AG04450 (cell line): ENCODE measurements at regions of chr4 and their contacts with region 1.

Region 1: GRCh38 chr4:72302981-72303704 is 265.9 kb downstream of the ADAMTS3 start:
- DNase-seq: peak; percentile 16
- H3K4me3 ChIP-seq: no peak overlapping the region
- H3K27ac ChIP-seq: no peak overlapping the region
- H3K27me3 ChIP-seq: no peaks in the 10 kb centered on the region
- CTCF ChIP-seq: peak; percentile 75

Region 2: DNA sequence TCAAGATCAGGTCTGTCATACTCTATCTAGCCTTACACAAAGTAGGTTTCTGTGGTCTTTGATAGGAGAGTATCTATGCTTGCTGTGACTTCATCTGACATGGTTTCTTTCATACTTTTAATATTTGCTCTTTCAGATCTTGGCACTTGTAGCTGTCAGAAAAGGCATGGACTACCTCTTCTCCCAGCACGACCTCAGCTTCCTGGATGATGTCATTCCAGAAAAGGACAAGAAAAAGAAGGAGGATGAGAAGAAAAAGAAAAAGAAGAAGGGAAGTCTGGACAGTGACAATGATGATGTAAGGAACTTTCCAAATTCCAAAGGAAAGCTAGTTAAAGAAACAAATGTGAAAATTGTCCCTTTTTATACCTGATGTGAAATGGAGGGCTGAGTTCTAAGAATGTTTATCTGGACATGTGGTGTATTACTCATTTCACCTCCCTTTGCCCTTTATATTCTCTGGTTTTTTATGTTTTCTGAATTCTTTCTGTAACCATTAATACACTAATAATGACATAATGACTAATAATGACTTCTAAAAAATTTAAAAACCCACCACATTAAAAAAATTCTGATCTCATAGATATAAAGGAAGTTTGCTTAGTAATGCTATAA is 743.1 kb before region 1 on chr4:
- CTCF ChIA-PET with region 1: no interaction called
- POLR2A ChIA-PET with region 1: no interaction called
- DNase-seq: no peak
- H3K4me3 ChIP-seq: no peak overlapping the region
- H3K27ac ChIP-seq: no peak overlapping the region
- H3K27me3 ChIP-seq: no peaks in the 10 kb centered on the region
- CTCF ChIP-seq: no peak

Region 3: DNA sequence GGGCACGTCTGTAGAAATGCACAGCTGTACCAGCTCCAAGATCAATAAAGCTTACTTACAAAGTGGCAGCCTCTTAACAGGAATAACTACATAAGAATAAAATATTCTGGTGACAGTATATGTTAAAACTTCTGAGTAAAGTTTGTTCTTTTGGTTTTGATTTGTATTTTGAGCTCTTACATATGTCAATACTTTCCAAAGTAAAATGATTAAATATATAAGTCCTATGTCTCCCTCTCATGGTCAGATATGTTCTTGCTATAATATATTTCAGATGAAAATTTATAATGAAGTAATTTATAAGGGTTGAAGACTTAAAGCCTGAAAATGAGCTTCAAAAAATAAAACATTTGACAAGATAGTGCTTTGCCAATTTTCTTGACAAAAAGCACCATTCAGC is 17.0 kb before region 1 on chr4:
- CTCF ChIA-PET with region 1: interaction called, 12 read pairs
- POLR2A ChIA-PET with region 1: no interaction called
- DNase-seq: no peak
- H3K4me3 ChIP-seq: no peak overlapping the region
- H3K27ac ChIP-seq: no peak overlapping the region
- H3K27me3 ChIP-seq: no peaks in the 10 kb centered on the region
- CTCF ChIP-seq: peak; percentile 34

Region 4: DNA sequence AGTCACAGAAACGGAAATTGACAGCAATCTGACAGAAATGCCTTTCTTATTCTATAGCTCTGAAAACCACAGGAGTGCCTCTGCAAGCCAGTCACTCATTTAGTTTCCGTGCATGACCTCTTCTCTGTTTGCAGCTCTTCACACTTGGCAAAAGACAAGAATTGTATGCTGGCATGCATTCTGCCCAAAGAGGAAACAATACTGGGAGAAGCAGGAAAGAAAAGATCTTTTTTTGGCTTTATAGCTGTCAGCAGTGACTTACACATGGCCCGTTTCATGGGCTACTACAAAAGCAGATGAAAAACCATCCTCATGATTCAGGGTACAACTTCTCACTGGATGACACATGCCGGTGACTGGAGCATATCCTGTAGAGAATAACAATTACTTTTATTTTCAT is 16.5 kb after region 1 on chr4:
- CTCF ChIA-PET with region 1: interaction called, 69 read pairs
- POLR2A ChIA-PET with region 1: no interaction called
- DNase-seq: peak; percentile 11
- H3K4me3 ChIP-seq: no peak overlapping the region
- H3K27ac ChIP-seq: no peak overlapping the region
- H3K27me3 ChIP-seq: no peaks in the 10 kb centered on the region
- CTCF ChIP-seq: no peak